Activated CD4-positive, alpha-beta T cell treated with anti-CD3 and anti-CD28 coated beads for 36 hours (primary cell): ENCODE measurements at regions of chr2 and their contacts with region 1.

Region 1: DNA sequence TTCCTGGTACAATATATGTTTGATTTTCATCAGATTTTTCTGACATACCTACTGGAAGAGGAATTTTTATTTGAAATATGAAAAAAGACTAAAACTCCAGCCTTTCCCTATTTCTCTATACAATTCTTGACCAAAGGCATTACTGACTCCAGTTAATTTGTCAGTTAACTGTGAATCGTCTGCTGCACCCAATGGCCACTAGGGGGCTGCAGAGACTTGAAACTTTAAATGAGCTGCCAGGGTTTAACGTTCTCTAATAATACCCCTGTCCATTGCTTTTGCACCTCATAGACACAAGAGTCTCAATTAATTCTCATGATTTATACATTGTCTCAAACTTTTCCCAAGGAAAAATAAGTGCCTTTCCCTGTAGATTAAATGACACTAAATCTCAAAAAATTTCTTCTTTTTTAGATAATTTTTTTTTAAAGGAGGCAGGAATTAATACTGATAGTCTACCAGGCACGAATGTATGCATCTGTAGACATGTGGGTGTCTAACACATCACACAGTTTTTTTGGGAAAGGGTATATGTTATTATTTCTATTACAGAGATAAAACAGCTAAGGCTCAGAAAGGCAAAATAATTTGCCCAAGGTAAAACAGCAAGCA is 1.8 kb upstream of the ALK start:
- DNase-seq: peak; percentile 72
- ATAC-seq: peak; percentile 37
- H3K4me3 Mint-ChIP-seq: no peak overlapping the region
- H3K27ac Mint-ChIP-seq: no peak overlapping the region
- H3K4me1 Mint-ChIP-seq: peaks cover 11% of the 10 kb centered on the region
- H3K27me3 Mint-ChIP-seq: peaks cover 49% of the 10 kb centered on the region

Region 2: GRCh38 chr2:29295857-29296256 is 627.4 kb before region 1 on chr2:
- CTCF ChIA-PET with region 1: no interaction called
- POLR2A ChIA-PET with region 1: no interaction called
- intact Hi-C with region 1: loop called in 1 of 2 experiments (anchors 5 kb)
- DNase-seq: peak; percentile 28
- ATAC-seq: no peak
- H3K4me3 Mint-ChIP-seq: no peak overlapping the region
- H3K27ac Mint-ChIP-seq: no peak overlapping the region
- H3K4me1 Mint-ChIP-seq: no peaks in the 10 kb centered on the region
- H3K27me3 Mint-ChIP-seq: peaks cover 40% of the 10 kb centered on the region

Region 3: GRCh38 chr2:29657674-29658073 is 265.5 kb before region 1 on chr2:
- CTCF ChIA-PET with region 1: no interaction called
- POLR2A ChIA-PET with region 1: no interaction called
- intact Hi-C with region 1: no loop called
- DNase-seq: no peak
- ATAC-seq: no peak
- H3K4me3 Mint-ChIP-seq: no peak overlapping the region
- H3K27ac Mint-ChIP-seq: no peak overlapping the region
- H3K4me1 Mint-ChIP-seq: no peaks in the 10 kb centered on the region
- H3K27me3 Mint-ChIP-seq: peaks cover 23% of the 10 kb centered on the region

Region 4: GRCh38 chr2:29936020-29936419 is 12.8 kb after region 1 on chr2:
- CTCF ChIA-PET with region 1: interaction called, 11 read pairs
- POLR2A ChIA-PET with region 1: no interaction called
- intact Hi-C with region 1: no loop called
- DNase-seq: no peak
- ATAC-seq: no peak
- H3K4me3 Mint-ChIP-seq: no peak overlapping the region
- H3K27ac Mint-ChIP-seq: no peak overlapping the region
- H3K4me1 Mint-ChIP-seq: no peaks in the 10 kb centered on the region
- H3K27me3 Mint-ChIP-seq: peaks cover 12% of the 10 kb centered on the region

Region 5: GRCh38 chr2:30026087-30027055 is 103.2 kb after region 1 on chr2:
- CTCF ChIA-PET with region 1: interaction called, 5 read pairs
- POLR2A ChIA-PET with region 1: no interaction called
- intact Hi-C with region 1: loop called (anchors 1 to 5 kb)
- DNase-seq: peak; percentile 37
- ATAC-seq: no peak
- H3K4me3 Mint-ChIP-seq: no peak overlapping the region
- H3K27ac Mint-ChIP-seq: no peak overlapping the region
- H3K4me1 Mint-ChIP-seq: no peaks in the 10 kb centered on the region
- H3K27me3 Mint-ChIP-seq: peaks cover 3% of the 10 kb centered on the region

Region 6: GRCh38 chr2:30072250-30072842 is 149.1 kb after region 1 on chr2:
- CTCF ChIA-PET with region 1: interaction called, 49 read pairs
- POLR2A ChIA-PET with region 1: interaction called, 3 read pairs
- intact Hi-C with region 1: loop called (anchors 1 kb)
- DNase-seq: peak; percentile 83
- ATAC-seq: peak; percentile 92
- H3K4me3 Mint-ChIP-seq: no peak overlapping the region
- H3K27ac Mint-ChIP-seq: no peak overlapping the region
- H3K4me1 Mint-ChIP-seq: no peaks in the 10 kb centered on the region
- H3K27me3 Mint-ChIP-seq: peaks cover 25% of the 10 kb centered on the region

Region 7: DNA sequence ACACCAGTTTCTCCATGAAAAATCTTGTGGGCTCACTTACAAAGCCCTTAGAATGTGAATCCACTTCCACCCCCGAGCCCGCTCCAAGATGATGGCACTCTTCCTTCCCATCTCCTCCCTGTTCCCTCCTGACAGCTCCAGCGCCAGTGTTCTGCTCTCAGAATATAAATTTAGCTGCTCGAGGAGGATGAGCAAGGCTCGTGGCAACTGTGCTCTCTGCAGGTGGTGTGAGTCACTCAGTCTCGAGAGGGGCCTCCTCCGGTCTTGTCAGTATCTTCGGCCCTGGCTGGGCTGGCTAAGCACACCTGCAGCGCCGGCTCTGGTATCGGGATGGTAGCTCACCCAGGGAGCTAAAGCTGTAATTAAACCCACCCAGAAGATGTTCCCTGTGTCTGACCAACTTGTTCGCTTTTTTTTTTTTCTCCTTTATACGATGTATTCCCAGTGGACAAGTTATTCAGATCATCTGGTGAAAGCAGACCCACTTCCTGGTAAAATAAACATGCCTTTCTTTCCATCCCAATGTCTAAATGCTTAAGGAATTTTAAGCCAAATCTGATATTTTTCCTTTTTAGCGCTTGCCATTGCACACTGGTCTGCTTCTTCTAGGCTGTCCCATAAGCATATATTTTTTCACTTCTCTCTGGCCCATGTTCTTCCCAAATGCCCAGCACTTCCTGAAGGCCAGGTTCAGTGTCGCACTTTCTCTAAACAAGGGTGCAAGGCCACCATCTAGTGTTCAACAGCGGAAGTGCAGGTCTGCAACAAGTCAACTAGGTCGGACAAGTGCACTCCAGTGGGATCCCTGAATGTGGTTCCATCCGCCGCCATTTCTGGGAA is 192.1 kb after region 1 on chr2:
- CTCF ChIA-PET with region 1: interaction called, 6 read pairs
- POLR2A ChIA-PET with region 1: no interaction called
- intact Hi-C with region 1: loop called in 1 of 2 experiments (anchors 2 kb)
- DNase-seq: peak; percentile 81
- ATAC-seq: peak; percentile 65
- H3K4me3 Mint-ChIP-seq: no peak overlapping the region
- H3K27ac Mint-ChIP-seq: no peak overlapping the region
- H3K4me1 Mint-ChIP-seq: peaks cover 4% of the 10 kb centered on the region
- H3K27me3 Mint-ChIP-seq: peaks cover 2% of the 10 kb centered on the region